PC-9 (cell line): ENCODE measurements at regions of chr2 and their contacts with region 1.

Region 1: GRCh38 chr2:112626604-112627059 is 19.1 kb upstream of the SLC20A1 start:
- DNase-seq: peak in 1 of 2 experiments; percentile 65
- H3K4me3 ChIP-seq: peak overlapping the region; percentile 45; the same call in 1 of the 2 replicates
- H3K27ac ChIP-seq: peak overlapping the region; percentile 95
- H3K4me1 ChIP-seq: peaks cover 96% of the 10 kb centered on the region
- H3K27me3 ChIP-seq: no peaks in the 10 kb centered on the region
- CTCF ChIP-seq: peak; percentile 85

Region 2: DNA sequence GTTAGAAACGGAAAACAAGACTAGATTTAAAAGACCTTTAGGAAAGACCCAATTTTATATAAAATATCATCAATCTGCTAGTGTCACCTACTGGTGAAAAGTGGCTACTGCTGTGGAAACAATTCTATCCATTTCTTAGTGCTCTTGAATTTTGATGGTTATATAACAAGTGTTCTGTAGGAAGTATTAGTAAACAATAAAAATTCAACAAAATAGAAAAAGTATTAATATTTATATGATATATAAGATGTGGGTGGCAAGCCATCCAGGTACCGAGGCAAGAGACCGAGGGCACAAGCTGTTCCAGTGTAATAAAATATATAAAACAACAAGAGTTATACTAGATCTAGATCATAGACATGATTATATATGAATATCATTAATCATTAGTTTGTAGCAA is 577.7 kb before region 1 on chr2:
- CTCF ChIA-PET with region 1: interaction called, 12 read pairs
- POLR2A ChIA-PET with region 1: no interaction called
- intact Hi-C with region 1: no loop called
- DNase-seq: peak; percentile 33 to 68
- H3K4me3 ChIP-seq: no peak overlapping the region
- H3K27ac ChIP-seq: no peak overlapping the region
- H3K4me1 ChIP-seq: peaks cover 7% of the 10 kb centered on the region
- H3K27me3 ChIP-seq: no peaks in the 10 kb centered on the region
- CTCF ChIP-seq: peak; percentile 89

Region 3: GRCh38 chr2:112547333-112547732 is 79.3 kb before region 1 on chr2:
- CTCF ChIA-PET with region 1: no interaction called
- POLR2A ChIA-PET with region 1: no interaction called
- intact Hi-C with region 1: no loop called
- DNase-seq: no peak
- H3K4me3 ChIP-seq: no peak overlapping the region
- H3K27ac ChIP-seq: no peak overlapping the region
- H3K4me1 ChIP-seq: peaks cover 15% of the 10 kb centered on the region
- H3K27me3 ChIP-seq: no peaks in the 10 kb centered on the region
- CTCF ChIP-seq: no peak

Region 4: DNA sequence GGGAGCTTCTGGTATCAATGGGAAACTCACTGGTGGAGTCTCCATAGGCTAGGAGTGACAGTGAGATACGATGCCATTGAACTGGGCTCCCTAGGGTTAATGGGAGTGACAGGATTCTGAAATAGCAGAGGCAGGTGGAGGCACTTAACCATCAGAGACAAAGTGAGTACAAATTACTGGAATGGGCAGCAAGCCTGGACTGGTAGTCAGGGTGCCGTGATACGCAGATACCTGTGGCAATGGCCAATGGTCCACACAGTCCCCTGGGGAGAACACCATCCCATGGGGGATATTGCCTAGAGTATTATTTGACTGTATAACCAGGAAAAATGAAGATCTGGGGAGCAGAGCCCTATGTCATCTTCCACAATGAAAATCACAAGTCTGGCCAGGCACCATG is 24.9 kb before region 1 on chr2:
- CTCF ChIA-PET with region 1: interaction called, 5 read pairs
- POLR2A ChIA-PET with region 1: no interaction called
- intact Hi-C with region 1: loop called (anchors 1 kb)
- DNase-seq: no peak
- H3K4me3 ChIP-seq: no peak overlapping the region
- H3K27ac ChIP-seq: no peak overlapping the region
- H3K4me1 ChIP-seq: peaks cover 23% of the 10 kb centered on the region
- H3K27me3 ChIP-seq: no peaks in the 10 kb centered on the region
- CTCF ChIP-seq: no peak

Region 5: DNA sequence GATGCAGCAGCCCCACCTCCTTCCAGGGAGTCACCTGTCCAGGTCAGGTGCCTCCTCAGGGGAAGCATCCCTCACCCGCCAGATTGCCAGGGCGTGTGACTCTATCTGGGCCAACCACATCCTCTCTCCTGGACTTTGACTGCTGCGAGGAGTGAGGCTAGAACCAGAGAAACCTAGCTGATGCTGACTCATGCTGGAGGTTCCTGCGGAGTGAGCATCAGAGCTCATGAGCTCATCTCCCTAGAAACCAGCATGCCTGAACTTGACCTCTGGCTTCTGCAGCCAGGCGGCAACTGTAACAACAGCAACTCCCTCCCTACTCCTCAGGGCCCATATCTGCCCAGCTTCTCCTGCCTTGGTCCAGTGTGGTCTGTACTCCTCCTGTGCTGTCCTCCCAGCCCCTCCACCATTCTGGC is 65.9 kb after region 1 on chr2:
- CTCF ChIA-PET with region 1: no interaction called
- POLR2A ChIA-PET with region 1: interaction called, 5 read pairs
- intact Hi-C with region 1: loop called (anchors 2 kb)
- DNase-seq: peak; percentile 88 to 96
- H3K4me3 ChIP-seq: peak overlapping the region; percentile 12; the same call in 1 of the 2 replicates
- H3K27ac ChIP-seq: peak overlapping the region; percentile 77
- H3K4me1 ChIP-seq: peaks cover 46% of the 10 kb centered on the region
- H3K27me3 ChIP-seq: no peaks in the 10 kb centered on the region
- CTCF ChIP-seq: no peak